ENCODE measurements at regions of chr11 and their contacts with region 1.

Region 1: GRCh38 chr11:57761301-57762234 is at the start of gene CTNND1:
- DNase-seq: peak; percentile 84 to 94 (median 88)
- H3K4me3 ChIP-seq: peak within 1 kb of the TSS; percentile 60
- H3K27ac ChIP-seq: peak within 1 kb of the TSS; percentile 79 to 92
- H3K4me1 ChIP-seq: peaks cover 8% of the 10 kb centered on the region
- H3K27me3 ChIP-seq: no peaks in the 10 kb centered on the region
- CTCF ChIP-seq: no peak
- EP300 ChIP-seq: no peak
- POLR2A ChIP-seq: peak; percentile 71
- total RNA-seq, gene CTNND1: 58.4 to 134 (median 119) TPM

Region 2: DNA sequence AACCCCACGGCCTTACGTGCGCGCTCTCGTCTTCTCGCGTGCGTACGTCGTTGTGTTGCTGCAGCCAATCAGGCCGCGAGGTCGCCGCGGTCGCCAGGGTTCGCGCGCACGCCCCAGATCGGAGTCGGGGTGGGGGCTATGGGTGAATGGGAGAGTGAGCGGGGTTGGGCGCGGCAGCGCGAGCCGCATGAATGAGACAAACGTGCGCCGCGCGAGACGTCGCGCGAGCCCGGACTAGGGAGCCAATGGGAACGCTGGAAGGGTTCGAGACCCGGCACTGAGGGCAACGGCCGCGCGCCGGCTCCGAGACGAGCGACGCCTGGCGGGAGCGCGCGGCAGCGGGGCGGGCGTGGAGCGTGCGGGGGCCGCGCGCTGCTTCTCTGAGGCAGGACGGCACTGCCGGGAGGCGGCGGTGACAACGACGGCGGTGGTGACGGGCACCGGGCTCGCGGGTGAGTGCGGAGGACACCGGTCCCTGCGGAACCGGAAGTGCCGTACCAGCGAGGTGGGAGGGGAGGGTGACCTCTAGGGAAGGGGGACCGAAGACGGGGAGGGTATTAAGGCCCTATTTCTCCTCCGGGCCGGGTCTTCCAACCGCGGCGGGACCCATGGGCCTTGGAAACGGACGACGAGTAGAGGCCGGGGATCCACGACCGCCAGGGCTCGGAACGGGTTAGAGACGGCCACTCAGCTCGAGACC is 93.7 kb before region 1 on chr11 and contains the start of gene ZDHHC5:
- intact Hi-C with region 1: loop called in 1 of 4 experiments (anchors 5 kb)
- DNase-seq: peak; percentile 98 to 99 (median 99)
- H3K4me3 ChIP-seq: peak within 1 kb of the TSS; percentile 85
- H3K27ac ChIP-seq: peak within 1 kb of the TSS; percentile 85 to 98
- H3K4me1 ChIP-seq: peaks cover 2% of the 10 kb centered on the region
- H3K27me3 ChIP-seq: no peaks in the 10 kb centered on the region
- CTCF ChIP-seq: peak; percentile 49 to 82 (median 64)
- EP300 ChIP-seq: no peak
- POLR2A ChIP-seq: peak; percentile 64
- total RNA-seq, gene ZDHHC5: 19.9 to 54.1 (median 39.9) TPM

Region 3: DNA sequence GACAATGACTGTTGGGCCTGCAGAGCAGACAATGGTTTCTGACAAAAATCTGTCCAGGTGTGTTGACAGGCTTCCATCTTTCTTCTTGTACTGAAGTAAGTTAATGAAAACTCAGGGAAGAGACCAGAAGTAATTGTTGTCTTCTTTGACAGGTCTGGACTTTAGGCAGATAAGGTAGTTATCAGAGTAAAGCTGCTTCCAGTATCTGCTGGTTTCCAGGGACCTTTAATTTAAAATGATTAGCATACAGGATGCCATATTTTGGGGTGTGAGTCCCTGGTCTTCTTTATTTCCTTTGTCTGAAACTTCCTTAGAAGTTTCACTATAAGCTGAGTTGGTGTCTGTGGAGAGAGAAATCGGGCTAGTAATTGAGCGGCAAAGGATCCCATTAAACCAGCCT is 47.7 kb before region 1 on chr11:
- intact Hi-C with region 1: loop called in 1 of 4 experiments (anchors 1 kb)
- DNase-seq: no peak
- H3K4me3 ChIP-seq: no peak overlapping the region
- H3K27ac ChIP-seq: no peak overlapping the region
- H3K4me1 ChIP-seq: peaks cover 14% of the 10 kb centered on the region
- H3K27me3 ChIP-seq: no peaks in the 10 kb centered on the region
- CTCF ChIP-seq: no peak
- EP300 ChIP-seq: no peak
- POLR2A ChIP-seq: no peak

Region 4: DNA sequence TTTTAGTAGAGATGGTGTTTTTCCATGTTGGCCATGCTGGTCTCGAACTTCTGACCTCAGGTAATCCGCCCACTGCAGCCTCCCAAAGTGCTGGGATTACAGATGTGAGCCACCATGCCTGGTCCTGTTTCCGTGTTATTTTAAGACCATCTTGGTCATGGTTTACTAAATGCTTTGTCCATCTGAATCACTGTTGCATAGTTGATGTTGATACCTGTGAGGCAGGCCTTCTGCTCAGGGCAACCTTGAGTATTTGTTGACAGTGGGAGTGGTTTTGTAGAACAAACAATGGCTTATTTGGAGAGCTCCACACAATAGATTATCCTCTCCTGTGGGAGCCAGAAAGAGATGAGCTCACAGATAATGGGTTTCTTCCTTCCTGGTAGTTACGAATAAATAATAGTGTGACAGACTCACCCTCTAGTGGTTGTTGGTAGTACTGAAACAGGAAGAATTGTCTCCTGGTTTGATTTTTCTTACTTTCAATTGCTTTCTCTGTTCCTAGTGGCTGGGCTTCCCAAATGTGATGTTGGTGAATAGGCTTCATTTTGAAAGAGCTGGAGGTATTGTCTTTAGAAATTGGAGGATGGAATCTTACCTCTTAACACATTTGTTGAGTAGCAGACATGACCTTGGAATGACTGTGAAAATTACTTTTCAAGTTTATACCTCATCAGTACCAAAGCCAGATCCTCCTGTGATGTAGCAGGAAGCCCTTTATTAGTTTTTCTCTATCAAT is 39.0 kb after region 1 on chr11:
- intact Hi-C with region 1: loop called in 2 of 4 experiments (anchors 5 to 10 kb)
- DNase-seq: no peak
- H3K4me3 ChIP-seq: no peak overlapping the region
- H3K27ac ChIP-seq: no peak overlapping the region
- H3K4me1 ChIP-seq: peaks cover 3% of the 10 kb centered on the region
- H3K27me3 ChIP-seq: no peaks in the 10 kb centered on the region
- CTCF ChIP-seq: peak; percentile 76 to 88 (median 81)
- EP300 ChIP-seq: no peak
- POLR2A ChIP-seq: no peak